WTC11 (cell line): ENCODE measurements at regions of chr10 and their contacts with region 1.

Region 1: DNA sequence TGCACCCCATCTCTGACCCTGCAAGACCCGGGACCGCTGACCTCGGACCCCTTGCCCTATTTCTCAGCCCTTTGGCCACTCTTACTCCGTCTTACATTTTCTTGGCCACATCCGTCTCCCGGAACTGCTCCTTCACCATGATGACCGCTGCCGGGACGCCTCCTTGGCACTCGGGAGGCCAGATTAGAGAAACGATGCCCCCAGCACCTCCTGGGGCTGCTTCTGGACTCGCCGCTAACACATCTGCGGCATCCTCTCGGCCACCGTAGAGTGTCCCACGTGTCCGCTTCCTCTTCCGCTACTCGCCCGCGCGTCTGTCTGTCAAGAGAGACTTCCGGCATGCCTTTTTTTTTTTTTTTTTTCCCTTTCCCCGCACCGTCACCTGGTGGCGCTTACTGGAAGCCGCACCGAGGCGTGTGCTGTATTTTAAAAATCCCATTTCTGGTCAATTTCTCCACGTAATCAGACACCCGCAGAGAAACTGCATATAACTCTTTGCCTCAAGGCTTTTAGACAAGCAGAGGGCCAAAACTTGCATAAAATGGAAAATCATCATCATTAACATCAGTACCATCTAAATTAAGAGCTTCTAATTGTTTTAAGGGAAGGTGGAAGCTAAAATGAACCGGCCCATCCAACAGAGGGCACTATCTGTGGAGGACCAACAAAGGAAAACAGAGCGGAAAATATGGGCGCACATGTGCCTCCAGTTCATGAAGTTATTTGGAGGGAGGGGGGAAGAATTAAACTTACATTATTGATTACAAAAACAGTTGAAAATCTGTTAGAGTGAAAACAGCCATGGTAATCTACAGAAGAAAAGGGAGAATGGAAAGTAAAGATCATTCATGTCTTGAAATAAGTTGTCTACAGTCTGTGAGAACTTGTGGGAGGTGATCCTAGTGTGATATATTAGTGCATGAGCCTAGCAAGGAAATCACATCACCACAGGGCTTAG is at the start of gene POLR3A:
- DNase-seq: peak; percentile 90
- ATAC-seq: peak; percentile 56
- H3K4me3 Mint-ChIP-seq: peak within 1 kb of the TSS; percentile 100
- H3K27ac Mint-ChIP-seq: peak within 1 kb of the TSS; percentile 97
- H3K4me1 Mint-ChIP-seq: peaks cover 13% of the 10 kb centered on the region
- H3K27me3 Mint-ChIP-seq: no peaks in the 10 kb centered on the region
- CTCF ChIP-seq: no peak
- total RNA-seq, gene POLR3A: 27.5 to 32.2 TPM (median 27.9 TPM) in 3 replicates

Region 2: DNA sequence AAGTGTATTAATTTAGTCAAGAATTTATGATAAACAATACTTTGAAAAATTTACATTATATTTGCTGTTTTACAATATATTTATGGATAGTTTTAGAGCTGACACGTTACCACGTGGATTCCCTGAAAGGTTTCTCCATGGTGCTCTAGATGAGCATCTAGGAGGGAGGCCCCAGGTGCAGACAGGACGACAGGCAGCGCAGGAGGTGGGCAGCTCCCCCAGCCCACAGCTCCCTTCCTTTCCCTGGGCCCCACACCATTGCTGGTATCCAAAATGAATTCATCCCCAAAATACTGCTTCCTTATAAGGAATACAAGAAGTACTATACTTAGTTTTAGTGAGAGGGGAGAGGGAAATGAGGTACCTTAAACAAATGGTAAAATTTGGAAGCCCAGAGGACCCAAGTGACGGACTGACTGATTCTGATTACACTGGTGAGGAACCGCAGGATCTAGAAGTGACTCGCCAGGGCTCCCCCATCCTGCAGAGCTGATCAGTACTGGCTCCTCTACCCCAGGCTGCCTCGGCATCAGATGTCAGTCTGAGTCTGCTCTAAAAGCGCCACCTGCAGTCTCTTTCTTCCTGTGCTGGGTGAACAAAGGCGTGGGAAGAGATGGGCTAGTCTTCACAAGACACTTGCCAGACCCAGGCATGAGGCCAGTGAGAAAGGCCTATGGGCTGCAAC is 192.2 kb before region 1 on chr10:
- CTCF ChIA-PET with region 1: interaction called, 11 read pairs
- POLR2A ChIA-PET with region 1: no interaction called
- DNase-seq: peak; percentile 82
- ATAC-seq: peak; percentile 96
- H3K4me3 Mint-ChIP-seq: no peak overlapping the region
- H3K27ac Mint-ChIP-seq: peak overlapping the region; percentile 95; the same call in 1 of the 2 replicates
- H3K4me1 Mint-ChIP-seq: peaks cover 26% of the 10 kb centered on the region
- H3K27me3 Mint-ChIP-seq: no peaks in the 10 kb centered on the region
- CTCF ChIP-seq: no peak